Heart left ventricle (tissue), 16 donors: ENCODE measurements at regions of chr3 and their contacts with region 1.

Region 1: GRCh38 chr3:120417272-120417911 is 33.4 kb downstream of the FSTL1 start:
- DNase-seq: peak; percentile 88 to 94 (median 93)
- ATAC-seq: peak; percentile 34 to 73 (median 60)
- H3K4me3 ChIP-seq: peak overlapping the region in 9 of 12 donors; percentile 10 to 47 (median 32)
- H3K27ac ChIP-seq: peak overlapping the region; percentile 65 to 92 (median 86)
- H3K4me1 ChIP-seq: peaks cover 16 to 79% (median 62%) of the 10 kb centered on the region in 12 donors
- H3K27me3 ChIP-seq: no peaks in the 10 kb centered on the region
- CTCF ChIP-seq: peak; percentile 84 to 95 (median 88)
- POLR2A ChIP-seq: peak in 1 of 2 donors; percentile 48

Region 2: GRCh38 chr3:119891944-119892721 is 525.3 kb before region 1 on chr3:
- intact Hi-C with region 1: loop called in 3 of 10 experiments (anchors 10 kb)
- DNase-seq: peak in 2 of 5 donors; percentile 30 to 45
- ATAC-seq: peak; percentile 64 to 81 (median 74)
- H3K4me3 ChIP-seq: no peak overlapping the region
- H3K27ac ChIP-seq: no peak overlapping the region
- H3K4me1 ChIP-seq: peaks cover 0 to 11% (median 7%) of the 10 kb centered on the region in 12 donors
- H3K27me3 ChIP-seq: no peaks in the 10 kb centered on the region
- CTCF ChIP-seq: peak; percentile 36 to 84 (median 78)
- POLR2A ChIP-seq: no peak

Region 3: GRCh38 chr3:120239644-120240043 is 177.7 kb before region 1 on chr3:
- intact Hi-C with region 1: loop called in 8 of 10 experiments (anchors 1 to 5 kb)
- DNase-seq: no peak
- ATAC-seq: no peak
- H3K4me3 ChIP-seq: no peak overlapping the region
- H3K27ac ChIP-seq: no peak overlapping the region
- H3K4me1 ChIP-seq: no peaks in the 10 kb centered on the region
- H3K27me3 ChIP-seq: peaks cover 0 to 8% (median 0%) of the 10 kb centered on the region in 9 donors
- CTCF ChIP-seq: no peak
- POLR2A ChIP-seq: no peak

Region 4: GRCh38 chr3:120348981-120349818 is 68.2 kb before region 1 on chr3 and contains the start of gene LRRC58:
- intact Hi-C with region 1: loop called in 4 of 10 experiments (anchors 1 to 10 kb)
- DNase-seq: peak; percentile 88 to 96 (median 92)
- ATAC-seq: peak; percentile 97 to 98 (median 97)
- H3K4me3 ChIP-seq: peak within 1 kb of the TSS; percentile 69 to 97 (median 84)
- H3K27ac ChIP-seq: peak within 1 kb of the TSS; percentile 80 to 94 (median 88)
- H3K4me1 ChIP-seq: peaks cover 0 to 41% (median 16%) of the 10 kb centered on the region in 12 donors
- H3K27me3 ChIP-seq: no peaks in the 10 kb centered on the region
- CTCF ChIP-seq: peak in 8 of 12 donors; percentile 10 to 54 (median 31)
- POLR2A ChIP-seq: peak; percentile 9 to 83
- total RNA-seq, gene LRRC58: 7.1 to 17.9 (median 10.5) TPM

Region 5: GRCh38 chr3:120506828-120507774 is 89.7 kb after region 1 on chr3:
- intact Hi-C with region 1: loop called in 6 of 10 experiments (anchors 2 to 10 kb)
- DNase-seq: peak in 2 of 5 donors; percentile 17 to 40
- ATAC-seq: peak in 3 of 4 donors; percentile 38 to 77 (median 67)
- H3K4me3 ChIP-seq: peak overlapping the region in 2 of 12 donors; percentile 1 to 28
- H3K27ac ChIP-seq: peak overlapping the region in 8 of 12 donors; percentile 4 to 36 (median 27)
- H3K4me1 ChIP-seq: peaks cover 0 to 25% (median 14%) of the 10 kb centered on the region in 12 donors
- H3K27me3 ChIP-seq: no peaks in the 10 kb centered on the region
- CTCF ChIP-seq: peak; percentile 55 to 76 (median 68)
- POLR2A ChIP-seq: no peak

Region 6: DNA sequence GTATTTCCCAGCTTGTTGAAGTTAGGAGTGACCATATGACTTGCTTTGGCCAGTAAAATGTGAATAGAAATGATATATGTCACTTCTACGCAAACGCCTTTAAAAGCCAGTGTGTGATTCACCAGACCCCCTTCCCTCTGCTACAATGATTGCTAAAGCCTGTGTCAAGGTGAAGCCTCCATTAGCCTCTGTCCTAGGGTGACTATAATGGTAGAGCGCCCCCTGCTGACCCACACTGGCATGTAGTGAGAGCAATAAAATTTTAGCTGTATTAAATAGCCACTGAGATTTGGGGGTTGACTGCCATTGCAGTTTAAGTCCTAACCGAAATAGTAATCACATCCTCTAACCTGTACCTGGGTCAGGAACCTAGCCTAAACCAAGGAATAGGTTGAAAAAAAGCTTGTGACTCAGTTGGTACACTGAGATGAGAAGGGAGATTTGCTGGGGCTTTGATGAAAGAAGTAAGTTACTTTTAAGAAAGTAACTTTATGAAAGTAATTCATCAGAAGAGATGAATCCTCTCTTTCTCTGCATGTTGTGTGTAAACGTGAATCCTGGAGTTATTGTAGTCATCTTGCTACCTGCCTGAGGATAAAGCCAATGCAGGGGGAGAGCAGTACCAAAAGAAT is 377.7 kb after region 1 on chr3:
- intact Hi-C with region 1: loop called in 2 of 10 experiments (anchors 10 kb)
- DNase-seq: peak; percentile 64 to 84 (median 76)
- ATAC-seq: peak; percentile 80 to 93 (median 90)
- H3K4me3 ChIP-seq: no peak overlapping the region
- H3K27ac ChIP-seq: no peak overlapping the region
- H3K4me1 ChIP-seq: no peaks in the 10 kb centered on the region
- H3K27me3 ChIP-seq: no peaks in the 10 kb centered on the region
- CTCF ChIP-seq: peak; percentile 60 to 87 (median 80)
- POLR2A ChIP-seq: no peak